GM12878 (cell line): ENCODE measurements at regions of chr10 and their contacts with region 1.

Region 1: GRCh38 chr10:88553116-88553752 is 29.9 kb downstream of the RNLS start:
- DNase-seq: peak; percentile 45
- ATAC-seq: peak; percentile 99
- H3K4me3 ChIP-seq: no peak overlapping the region
- H3K27ac ChIP-seq: no peak overlapping the region; the same call in 1 of the 2 replicates
- H3K4me1 ChIP-seq: 0 out of 2 replicates have a peak, but pooled peaks cover 5% of the 10 kb centered on the region
- H3K27me3 ChIP-seq: no peaks in the 10 kb centered on the region
- CTCF ChIP-seq: peak; percentile 84 to 94 (median 90)
- EP300 ChIP-seq: no peak
- POLR2A ChIP-seq: no peak
- RAD21 ChIP-seq: peak; percentile 97

Region 2: DNA sequence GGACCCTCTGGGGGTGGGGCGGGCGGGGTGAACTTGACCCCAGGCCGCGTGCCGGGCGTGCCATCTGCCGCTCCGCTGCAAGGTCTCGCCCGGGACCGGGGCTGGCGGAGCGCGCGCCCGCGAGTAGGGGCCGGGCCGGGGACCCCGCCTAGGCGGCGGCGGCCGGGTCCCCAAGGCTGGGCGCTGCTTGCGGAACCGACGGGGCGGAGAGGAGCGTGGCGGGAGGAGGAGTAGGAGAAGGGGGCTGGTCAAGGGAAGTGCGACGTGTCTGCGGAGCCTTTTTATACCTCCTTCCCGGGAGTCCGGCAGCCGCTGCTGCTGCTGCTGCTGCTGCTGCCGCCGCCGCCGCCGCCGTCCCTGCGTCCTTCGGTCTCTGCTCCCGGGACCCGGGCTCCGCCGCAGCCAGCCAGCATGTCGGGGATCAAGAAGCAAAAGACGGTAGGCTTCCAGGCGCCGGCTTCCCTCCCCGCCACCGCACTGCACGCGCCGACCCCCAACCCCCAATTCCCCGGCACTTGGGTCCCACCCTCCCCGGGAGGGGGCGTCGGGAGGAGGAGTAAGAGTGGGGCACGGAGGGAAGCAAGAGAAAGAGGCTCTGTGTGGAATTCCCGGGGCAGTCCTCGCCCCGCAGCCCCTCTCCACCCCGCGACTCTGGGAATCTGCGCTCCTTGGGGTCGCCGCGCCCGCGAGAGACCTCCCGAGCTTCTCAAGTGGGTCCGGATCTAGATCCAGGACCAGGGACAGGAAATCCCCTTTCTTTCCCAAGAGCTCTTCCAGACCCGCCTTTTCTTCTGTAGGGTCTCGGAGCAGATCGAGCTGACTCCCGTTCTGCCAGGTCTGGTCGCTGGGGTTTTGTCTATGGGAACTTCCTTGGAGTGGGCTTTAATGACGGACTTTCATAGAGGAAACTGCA is 893.4 kb before region 1 on chr10 and contains the start of gene PAPSS2:
- CTCF ChIA-PET with region 1: interaction called, 9 read pairs
- POLR2A ChIA-PET with region 1: no interaction called
- RAD21 ChIA-PET with region 1: no interaction called
- SMC1A ChIA-PET with region 1: no interaction called
- in situ Hi-C with region 1: no loop called
- intact Hi-C with region 1: loop called (anchors 1 kb)
- DNase-seq: no peak
- ATAC-seq: peak; percentile 65
- H3K4me3 ChIP-seq: peak within 1 kb of the TSS; percentile 74
- H3K27ac ChIP-seq: no peak within 1 kb of the TSS
- H3K4me1 ChIP-seq: no peaks in the 10 kb centered on the region; the same call in 1 of the 2 replicates
- H3K27me3 ChIP-seq: peaks cover 3 to 4% of the 10 kb centered on the region in 2 experiments
- CTCF ChIP-seq: no peak
- EP300 ChIP-seq: no peak
- POLR2A ChIP-seq: 0 out of 2 replicates have a peak, but pooled peaks have one; percentile 22
- RAD21 ChIP-seq: no peak
- polyA plus RNA-seq, gene PAPSS2: 0.29 to 0.31 TPM

Region 3: DNA sequence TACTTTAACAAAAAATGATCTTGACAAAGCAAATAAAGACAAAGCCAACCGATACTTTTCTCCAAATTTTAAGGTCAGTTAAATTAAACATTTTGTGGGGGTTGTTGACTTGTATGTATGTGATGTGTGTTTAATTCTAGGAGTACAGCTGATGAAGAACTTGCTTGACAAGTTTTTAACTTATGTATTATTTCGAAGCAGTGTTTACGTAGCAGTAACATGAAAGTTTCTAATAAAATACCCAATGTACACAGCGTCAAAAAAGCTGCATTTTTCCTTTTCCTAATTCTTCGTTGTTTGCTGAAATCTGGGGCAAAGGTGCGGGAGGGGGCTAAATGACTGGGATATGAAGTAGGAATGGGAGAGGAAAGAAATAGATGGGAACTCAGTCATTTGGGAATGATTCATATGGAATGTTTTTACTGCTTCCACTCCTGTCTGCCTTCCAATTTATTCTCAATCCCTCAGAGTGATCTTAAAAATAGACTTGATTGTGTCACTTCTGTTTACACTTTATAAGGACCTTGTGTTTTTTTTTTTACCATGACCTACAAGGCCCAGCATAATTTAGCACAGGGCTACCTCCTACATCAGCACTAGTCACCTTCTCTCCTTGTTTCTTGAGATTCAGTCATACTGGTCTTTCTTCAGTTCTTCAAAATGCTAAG is 592.1 kb before region 1 on chr10:
- CTCF ChIA-PET with region 1: no interaction called
- POLR2A ChIA-PET with region 1: no interaction called
- RAD21 ChIA-PET with region 1: no interaction called
- SMC1A ChIA-PET with region 1: no interaction called
- in situ Hi-C with region 1: no loop called
- intact Hi-C with region 1: loop called (anchors 10 kb)
- DNase-seq: no peak
- ATAC-seq: no peak
- H3K4me3 ChIP-seq: no peak overlapping the region
- H3K27ac ChIP-seq: no peak overlapping the region
- H3K4me1 ChIP-seq: no peaks in the 10 kb centered on the region
- H3K27me3 ChIP-seq: no peaks in the 10 kb centered on the region
- CTCF ChIP-seq: no peak
- EP300 ChIP-seq: no peak
- POLR2A ChIP-seq: no peak
- RAD21 ChIP-seq: no peak

Region 4: DNA sequence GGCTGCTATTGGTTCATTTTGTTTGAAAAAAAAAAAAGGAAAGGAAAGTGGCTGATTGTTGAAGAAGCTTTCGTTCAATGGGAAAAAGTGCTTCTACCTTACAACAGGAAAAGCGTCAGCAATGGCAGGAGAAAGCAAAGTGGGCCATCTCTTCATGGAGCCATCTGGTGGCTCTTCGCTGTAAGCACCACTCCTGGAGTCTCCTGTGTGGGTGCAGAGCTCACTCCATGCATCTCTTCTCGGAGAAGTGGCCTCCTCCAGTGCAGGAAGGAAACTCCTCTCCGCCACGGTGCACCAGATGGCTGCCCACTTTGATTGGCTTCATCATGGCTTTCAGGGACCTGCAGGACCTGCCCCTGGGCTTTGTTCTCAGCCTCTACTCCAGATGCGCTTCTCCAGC is 438.9 kb before region 1 on chr10:
- CTCF ChIA-PET with region 1: interaction called, 3 read pairs
- POLR2A ChIA-PET with region 1: no interaction called
- RAD21 ChIA-PET with region 1: no interaction called
- SMC1A ChIA-PET with region 1: interaction called, 4 read pairs
- in situ Hi-C with region 1: no loop called
- intact Hi-C with region 1: loop called (anchors 5 kb)
- DNase-seq: no peak
- ATAC-seq: peak; percentile 61
- H3K4me3 ChIP-seq: no peak overlapping the region
- H3K27ac ChIP-seq: peak overlapping the region; percentile 86
- H3K4me1 ChIP-seq: peaks cover 87% of the 10 kb centered on the region
- H3K27me3 ChIP-seq: no peaks in the 10 kb centered on the region
- CTCF ChIP-seq: peak; percentile 69 to 73 (median 72)
- EP300 ChIP-seq: no peak
- POLR2A ChIP-seq: no peak
- RAD21 ChIP-seq: peak; percentile 86

Region 5: GRCh38 chr10:88270871-88271713 is 282.1 kb before region 1 on chr10:
- CTCF ChIA-PET with region 1: no interaction called
- POLR2A ChIA-PET with region 1: interaction called, 4 read pairs
- RAD21 ChIA-PET with region 1: no interaction called
- SMC1A ChIA-PET with region 1: no interaction called
- in situ Hi-C with region 1: no loop called
- intact Hi-C with region 1: loop called (anchors 5 kb)
- DNase-seq: peak; percentile 97
- ATAC-seq: peak; percentile 95
- H3K4me3 ChIP-seq: no peak overlapping the region; the same call in 1 of the 2 replicates
- H3K27ac ChIP-seq: peak overlapping the region; percentile 96
- H3K4me1 ChIP-seq: peaks cover 48% of the 10 kb centered on the region
- H3K27me3 ChIP-seq: no peaks in the 10 kb centered on the region
- CTCF ChIP-seq: no peak
- EP300 ChIP-seq: peak; percentile 93 to 95
- POLR2A ChIP-seq: peak; percentile 7; the same call in 1 of the 2 replicates
- RAD21 ChIP-seq: peak; percentile 17; the same call in 1 of the 2 replicates

Region 6: DNA sequence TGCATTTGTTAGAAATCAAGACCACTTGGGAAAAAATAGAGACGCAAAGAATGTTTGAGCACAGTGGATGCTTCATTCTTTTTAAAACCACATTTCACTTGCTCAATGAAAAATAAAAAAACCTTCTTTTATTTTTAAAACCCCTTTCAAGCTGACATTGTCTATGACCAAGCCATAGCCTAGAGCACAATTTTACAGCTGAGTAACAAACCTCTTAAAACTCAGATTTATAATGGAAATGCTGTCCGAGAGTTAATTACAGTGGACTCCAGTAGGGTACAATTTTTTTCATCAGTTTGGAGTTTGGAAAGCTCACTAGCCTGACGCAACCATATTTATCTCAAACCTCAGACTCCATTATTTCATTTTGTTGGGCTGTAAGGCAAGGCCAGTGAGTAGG is 86.4 kb before region 1 on chr10:
- CTCF ChIA-PET with region 1: no interaction called
- POLR2A ChIA-PET with region 1: no interaction called
- RAD21 ChIA-PET with region 1: no interaction called
- SMC1A ChIA-PET with region 1: no interaction called
- in situ Hi-C with region 1: no loop called
- intact Hi-C with region 1: no loop called
- DNase-seq: no peak
- ATAC-seq: no peak
- H3K4me3 ChIP-seq: no peak overlapping the region
- H3K27ac ChIP-seq: no peak overlapping the region
- H3K4me1 ChIP-seq: no peaks in the 10 kb centered on the region
- H3K27me3 ChIP-seq: no peaks in the 10 kb centered on the region
- CTCF ChIP-seq: no peak
- EP300 ChIP-seq: no peak
- POLR2A ChIP-seq: no peak
- RAD21 ChIP-seq: no peak

Region 7: DNA sequence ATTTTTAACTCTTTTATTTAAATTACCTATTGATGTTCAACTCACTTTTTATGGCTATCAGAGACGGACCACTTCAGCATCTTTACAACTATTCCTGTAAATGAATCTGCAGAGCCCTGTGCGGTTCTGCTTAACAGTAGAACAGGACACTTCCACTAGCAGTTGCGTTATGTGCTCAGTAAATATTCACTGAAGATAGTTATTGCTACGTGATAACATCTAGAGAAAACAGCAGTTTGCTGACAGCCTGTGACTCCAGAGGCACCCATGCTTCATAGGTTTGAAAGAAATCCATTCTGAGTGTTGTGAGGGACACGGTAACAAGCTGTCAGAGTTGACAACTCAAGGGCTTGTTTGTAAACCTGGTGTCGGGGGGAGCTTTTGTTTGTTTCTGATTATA is 260.9 kb after region 1 on chr10:
- CTCF ChIA-PET with region 1: no interaction called
- POLR2A ChIA-PET with region 1: no interaction called
- RAD21 ChIA-PET with region 1: no interaction called
- SMC1A ChIA-PET with region 1: no interaction called
- in situ Hi-C with region 1: no loop called
- intact Hi-C with region 1: no loop called
- DNase-seq: no peak
- ATAC-seq: no peak
- H3K4me3 ChIP-seq: no peak overlapping the region
- H3K27ac ChIP-seq: no peak overlapping the region
- H3K4me1 ChIP-seq: no peaks in the 10 kb centered on the region
- H3K27me3 ChIP-seq: peaks cover 0 to 4% of the 10 kb centered on the region in 2 experiments; a peak in 2 of 4 replicates
- CTCF ChIP-seq: no peak
- EP300 ChIP-seq: no peak
- POLR2A ChIP-seq: no peak
- RAD21 ChIP-seq: no peak

Region 8: GRCh38 chr10:89426230-89426868 is 873.1 kb after region 1 on chr10:
- CTCF ChIA-PET with region 1: no interaction called
- POLR2A ChIA-PET with region 1: no interaction called
- RAD21 ChIA-PET with region 1: no interaction called
- SMC1A ChIA-PET with region 1: no interaction called
- in situ Hi-C with region 1: no loop called
- intact Hi-C with region 1: no loop called
- DNase-seq: no peak
- ATAC-seq: peak; percentile 87
- H3K4me3 ChIP-seq: no peak overlapping the region
- H3K27ac ChIP-seq: no peak overlapping the region
- H3K4me1 ChIP-seq: no peaks in the 10 kb centered on the region
- H3K27me3 ChIP-seq: no peaks in the 10 kb centered on the region
- CTCF ChIP-seq: peak; percentile 66 to 85 (median 79); a peak in 4 of 6 replicates
- EP300 ChIP-seq: no peak
- POLR2A ChIP-seq: no peak
- RAD21 ChIP-seq: peak; percentile 86